ENCODE measurements at regions of chr13 and their contacts with region 1.

Region 1: GRCh38 chr13:79538757-79539156 is 57.8 kb downstream of the NDFIP2 start:
- DNase-seq: no peak
- CTCF ChIP-seq: no peak

Region 2: DNA sequence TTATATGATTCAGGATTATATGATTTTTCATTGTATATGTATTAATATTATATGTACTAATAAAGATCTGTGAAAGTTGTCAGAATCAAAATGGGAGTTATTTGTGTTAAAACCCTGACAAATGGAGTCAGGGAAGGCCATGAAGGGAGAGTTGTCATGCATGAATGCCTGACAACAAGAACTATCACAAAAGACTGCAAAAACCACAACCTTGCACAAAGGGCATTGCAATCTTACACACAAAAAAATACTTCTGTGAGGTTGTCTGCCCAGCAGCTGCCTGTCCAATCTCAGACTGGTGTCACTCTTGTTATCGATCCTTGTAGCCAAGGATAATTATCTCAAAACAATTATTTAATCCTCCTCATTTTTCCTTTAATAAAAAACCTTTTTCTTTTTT is 111.5 kb before region 1 on chr13:
- in situ Hi-C with region 1: loop called (anchors 5 kb)
- DNase-seq: no peak
- CTCF ChIP-seq: no peak

Measured in GM13976 (cell line).